Common myeloid progenitor, CD34-positive (primary cell): ENCODE measurements at regions of chr19 and their contacts with region 1.

Region 1: DNA sequence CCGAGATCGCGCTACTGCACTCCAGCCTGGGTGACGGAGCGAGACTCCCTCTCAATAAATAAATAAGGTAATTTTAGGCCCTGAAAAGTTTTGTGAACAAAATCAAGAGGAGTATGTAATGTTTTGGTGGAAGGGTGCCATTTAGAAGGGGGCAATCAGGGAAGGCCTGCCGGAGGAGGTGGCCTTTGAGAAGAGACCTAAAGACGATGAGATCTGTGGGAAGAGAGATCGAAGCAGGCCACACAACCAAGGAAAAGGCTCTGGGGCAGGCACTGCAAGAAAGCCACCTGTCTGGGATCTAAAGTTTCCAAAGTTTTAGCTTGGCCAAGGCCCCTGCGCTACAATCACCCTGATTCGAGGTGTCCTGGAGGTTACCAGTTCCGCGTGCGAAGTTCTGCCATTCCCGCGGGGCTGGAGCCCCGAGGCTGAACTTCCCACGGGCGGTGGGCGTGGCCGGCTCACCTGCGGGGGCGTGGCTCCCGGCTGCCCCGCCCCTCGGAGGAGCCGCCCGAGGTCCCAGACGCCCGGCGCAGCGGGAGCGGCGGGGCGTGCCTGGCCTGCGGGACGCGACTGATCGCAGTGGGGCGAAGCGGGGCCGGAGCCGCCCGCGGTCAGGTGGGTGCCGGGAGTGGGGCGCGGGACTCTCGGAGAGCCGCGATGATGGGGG is at the start of gene KLC3:
- DNase-seq: peak in 1 of 3 donors; percentile 14
- H3K4me3 ChIP-seq: peak within 1 kb of the TSS in 5 of 7 experiments; percentile 7 to 48 (median 42)
- H3K27ac ChIP-seq: no peak within 1 kb of the TSS
- H3K4me1 ChIP-seq: peaks cover 0 to 13% (median 7%) of the 10 kb centered on the region in 4 experiments
- H3K27me3 ChIP-seq: peaks cover 0 to 46% (median 16%) of the 10 kb centered on the region in 5 experiments

Region 2: GRCh38 chr19:45200568-45200994 is 139.8 kb before region 1 on chr19:
- CTCF ChIA-PET with region 1: interaction called, 19 read pairs
- POLR2A ChIA-PET with region 1: no interaction called
- DNase-seq: peak; percentile 43 to 70 (median 68)
- H3K4me3 ChIP-seq: no peak overlapping the region
- H3K27ac ChIP-seq: no peak overlapping the region
- H3K4me1 ChIP-seq: no peaks in the 10 kb centered on the region
- H3K27me3 ChIP-seq: peaks cover 0 to 3% (median 0%) of the 10 kb centered on the region in 5 experiments

Region 3: GRCh38 chr19:45327404-45328143 is 12.8 kb before region 1 on chr19:
- CTCF ChIA-PET with region 1: interaction called, 13 read pairs
- POLR2A ChIA-PET with region 1: no interaction called
- DNase-seq: no peak
- H3K4me3 ChIP-seq: no peak overlapping the region
- H3K27ac ChIP-seq: no peak overlapping the region
- H3K4me1 ChIP-seq: peaks cover 0 to 14% (median 11%) of the 10 kb centered on the region in 4 experiments
- H3K27me3 ChIP-seq: peaks cover 0 to 25% (median 11%) of the 10 kb centered on the region in 5 experiments

Region 4: DNA sequence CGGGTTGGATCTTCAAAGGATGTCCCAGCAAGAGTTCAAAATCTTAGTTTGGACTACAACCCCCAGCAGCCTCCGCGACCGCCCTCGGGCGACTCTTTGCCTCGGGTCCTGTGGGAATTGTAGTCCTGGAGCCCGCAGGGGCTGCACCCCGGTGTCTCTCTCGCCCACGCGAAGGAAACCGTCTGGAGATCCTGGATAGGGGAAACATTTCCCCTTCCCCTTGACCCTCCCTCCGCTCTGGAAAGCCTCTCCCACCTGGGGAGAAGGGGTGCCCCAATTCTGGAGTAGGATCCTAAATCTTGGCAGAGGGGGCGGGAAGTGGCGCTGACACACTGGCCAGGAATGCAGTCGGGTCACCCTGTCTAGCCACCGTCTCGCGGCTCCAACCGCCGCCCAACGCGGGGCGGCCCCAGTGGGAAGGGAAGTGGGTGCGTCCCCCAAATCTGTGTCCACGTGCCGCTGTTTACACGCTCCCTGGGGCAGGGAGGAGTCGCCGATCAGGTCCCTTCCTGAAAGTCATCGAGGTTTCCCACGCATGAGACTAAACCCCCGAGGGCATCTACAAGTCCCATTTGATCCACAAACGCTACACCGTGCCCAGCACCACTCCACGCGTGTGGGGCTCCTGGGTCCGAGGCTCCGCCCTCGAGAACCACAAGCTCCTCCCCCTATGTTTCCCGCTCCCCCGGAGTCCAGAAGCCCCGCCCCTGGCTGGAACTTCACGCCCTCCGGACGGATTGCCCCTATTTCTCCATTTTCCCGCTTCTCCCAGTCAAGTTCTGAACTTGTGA is 65.3 kb after region 1 on chr19:
- CTCF ChIA-PET with region 1: no interaction called
- POLR2A ChIA-PET with region 1: no interaction called
- DNase-seq: peak; percentile 73 to 85 (median 78)
- H3K4me3 ChIP-seq: peak overlapping the region; percentile 70 to 92 (median 83)
- H3K27ac ChIP-seq: peak overlapping the region; percentile 96 to 99
- H3K4me1 ChIP-seq: peaks cover 5 to 38% (median 38%) of the 10 kb centered on the region in 4 experiments
- H3K27me3 ChIP-seq: peaks cover 0 to 32% (median 21%) of the 10 kb centered on the region in 5 experiments